Caco-2 (cell line): ENCODE measurements at regions of chr1 and their contacts with region 1.

Region 1: GRCh38 chr1:209651148-209651547 is 1.1 kb downstream of the LAMB3 start:
- DNase-seq: peak; percentile 68 to 75
- H3K4me3 ChIP-seq: peak overlapping the region; percentile 57
- H3K4me3 Mint-ChIP-seq: peak overlapping the region; percentile 96
- H3K27ac Mint-ChIP-seq: peak overlapping the region; percentile 88
- H3K4me1 ChIP-seq: peaks cover 70% of the 10 kb centered on the region
- H3K4me1 Mint-ChIP-seq: peaks cover 56% of the 10 kb centered on the region
- H3K27me3 ChIP-seq: no peaks in the 10 kb centered on the region
- H3K27me3 Mint-ChIP-seq: no peaks in the 10 kb centered on the region
- CTCF ChIP-seq: no peak

Region 2: DNA sequence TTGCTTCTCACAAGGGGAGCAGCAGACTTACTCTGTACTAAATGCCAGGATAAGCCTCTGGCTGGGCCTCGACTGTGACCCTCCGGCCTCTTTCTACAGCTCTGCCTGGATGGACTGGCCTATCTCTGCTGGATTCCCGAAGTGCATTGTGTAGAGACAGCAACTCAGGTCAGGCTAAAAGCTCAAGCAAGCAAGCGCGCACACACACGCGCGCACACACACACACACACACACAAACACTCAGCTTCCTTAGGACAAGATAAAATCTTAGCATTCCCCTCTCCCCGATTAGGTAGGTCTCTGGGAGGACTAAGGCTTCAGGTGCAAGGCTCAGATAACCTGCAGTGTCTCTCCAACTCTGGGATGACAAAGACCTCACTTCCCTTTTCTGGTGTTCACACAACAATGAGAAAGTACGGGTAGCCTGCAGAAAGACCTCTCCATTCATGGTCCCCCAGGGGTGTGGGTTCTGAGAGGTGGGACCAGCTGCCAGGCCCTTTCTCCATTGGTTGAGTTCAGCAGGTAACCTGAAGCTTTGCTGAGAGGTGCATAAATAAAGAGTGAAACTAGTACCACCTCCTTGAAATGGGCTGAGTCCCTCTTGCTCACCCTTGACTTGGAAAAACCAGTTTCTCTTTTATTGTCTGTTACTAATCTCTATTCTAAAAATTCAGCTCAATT is 222.8 kb before region 1 on chr1:
- CTCF ChIA-PET with region 1: no interaction called
- POLR2A ChIA-PET with region 1: no interaction called
- intact Hi-C with region 1: loop called (anchors 10 kb)
- DNase-seq: peak; percentile 50 to 76
- H3K4me3 ChIP-seq: no peak overlapping the region
- H3K4me3 Mint-ChIP-seq: peak overlapping the region; percentile 78
- H3K27ac Mint-ChIP-seq: peak overlapping the region; percentile 91
- H3K4me1 ChIP-seq: peaks cover 59% of the 10 kb centered on the region
- H3K4me1 Mint-ChIP-seq: peaks cover 58% of the 10 kb centered on the region
- H3K27me3 ChIP-seq: no peaks in the 10 kb centered on the region
- H3K27me3 Mint-ChIP-seq: no peaks in the 10 kb centered on the region
- CTCF ChIP-seq: no peak

Region 3: GRCh38 chr1:209617047-209617673 is 34.0 kb before region 1 on chr1:
- CTCF ChIA-PET with region 1: no interaction called
- POLR2A ChIA-PET with region 1: no interaction called
- intact Hi-C with region 1: no loop called
- DNase-seq: no peak
- H3K4me3 ChIP-seq: no peak overlapping the region
- H3K4me3 Mint-ChIP-seq: no peak overlapping the region
- H3K27ac Mint-ChIP-seq: no peak overlapping the region
- H3K4me1 ChIP-seq: no peaks in the 10 kb centered on the region
- H3K4me1 Mint-ChIP-seq: no peaks in the 10 kb centered on the region
- H3K27me3 ChIP-seq: no peaks in the 10 kb centered on the region
- H3K27me3 Mint-ChIP-seq: no peaks in the 10 kb centered on the region
- CTCF ChIP-seq: no peak

Region 4: DNA sequence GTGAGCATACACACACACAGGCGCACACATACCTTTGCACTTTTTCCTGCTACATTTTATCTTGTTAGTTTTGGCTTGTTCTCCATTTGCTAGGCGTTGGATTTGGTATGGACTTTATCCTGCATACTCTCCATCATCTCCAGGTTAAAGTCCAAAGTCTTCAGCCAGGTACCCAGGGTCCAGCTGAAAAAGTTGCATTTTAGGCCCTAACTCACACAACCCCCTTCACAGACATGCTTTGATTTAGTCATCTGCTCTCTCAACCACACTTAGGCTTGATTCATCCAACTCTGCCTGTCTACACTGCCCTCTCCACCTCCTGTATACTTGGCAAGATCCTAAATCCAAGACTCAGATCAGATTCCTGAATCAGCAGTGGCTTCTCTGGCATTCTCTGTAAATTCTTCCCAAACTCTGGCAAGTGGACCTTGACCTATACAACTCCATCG is 11.8 kb after region 1 on chr1:
- CTCF ChIA-PET with region 1: interaction called, 6 read pairs
- POLR2A ChIA-PET with region 1: interaction called, 15 read pairs
- intact Hi-C with region 1: loop called (anchors 1 kb)
- DNase-seq: no peak
- H3K4me3 ChIP-seq: no peak overlapping the region
- H3K4me3 Mint-ChIP-seq: peak overlapping the region; percentile 50
- H3K27ac Mint-ChIP-seq: peak overlapping the region; percentile 23
- H3K4me1 ChIP-seq: peaks cover 38% of the 10 kb centered on the region
- H3K4me1 Mint-ChIP-seq: peaks cover 34% of the 10 kb centered on the region
- H3K27me3 ChIP-seq: no peaks in the 10 kb centered on the region
- H3K27me3 Mint-ChIP-seq: no peaks in the 10 kb centered on the region
- CTCF ChIP-seq: no peak

Region 5: GRCh38 chr1:209674957-209675564 is 23.9 kb after region 1 on chr1 and contains the start of gene G0S2:
- CTCF ChIA-PET with region 1: interaction called, 34 read pairs
- POLR2A ChIA-PET with region 1: interaction called, 47 read pairs
- intact Hi-C with region 1: loop called (anchors 1 kb)
- DNase-seq: peak; percentile 80 to 83
- H3K4me3 ChIP-seq: peak within 1 kb of the TSS; percentile 81
- H3K4me3 Mint-ChIP-seq: peak within 1 kb of the TSS; percentile 94
- H3K27ac Mint-ChIP-seq: peak within 1 kb of the TSS; percentile 81
- H3K4me1 ChIP-seq: peaks cover 12% of the 10 kb centered on the region
- H3K4me1 Mint-ChIP-seq: peaks cover 41% of the 10 kb centered on the region
- H3K27me3 ChIP-seq: no peaks in the 10 kb centered on the region
- H3K27me3 Mint-ChIP-seq: no peaks in the 10 kb centered on the region
- CTCF ChIP-seq: no peak
- total RNA-seq, gene G0S2: 40.4 and 45.7 TPM in 2 replicates